ENCODE measurements at regions of chr12 and their contacts with region 1.

Region 1: GRCh38 chr12:12736759-12737676 is 19.9 kb downstream of the CDKN1B start:
- DNase-seq: peak; percentile 61 to 70 (median 64)
- H3K4me3 ChIP-seq: peak overlapping the region in 1 of 2 donors; percentile 46
- H3K4me3 Mint-ChIP-seq: peak overlapping the region; percentile 67 to 88 (median 76)
- H3K27ac ChIP-seq: peak overlapping the region; percentile 76
- H3K27ac Mint-ChIP-seq: peak overlapping the region; percentile 88 to 93 (median 93)
- H3K4me1 ChIP-seq: peaks cover 55% of the 10 kb centered on the region
- H3K4me1 Mint-ChIP-seq: peaks cover 24 to 59% (median 41%) of the 10 kb centered on the region in 4 donors
- H3K27me3 ChIP-seq: no peaks in the 10 kb centered on the region
- H3K27me3 Mint-ChIP-seq: no peaks in the 10 kb centered on the region

Region 2: DNA sequence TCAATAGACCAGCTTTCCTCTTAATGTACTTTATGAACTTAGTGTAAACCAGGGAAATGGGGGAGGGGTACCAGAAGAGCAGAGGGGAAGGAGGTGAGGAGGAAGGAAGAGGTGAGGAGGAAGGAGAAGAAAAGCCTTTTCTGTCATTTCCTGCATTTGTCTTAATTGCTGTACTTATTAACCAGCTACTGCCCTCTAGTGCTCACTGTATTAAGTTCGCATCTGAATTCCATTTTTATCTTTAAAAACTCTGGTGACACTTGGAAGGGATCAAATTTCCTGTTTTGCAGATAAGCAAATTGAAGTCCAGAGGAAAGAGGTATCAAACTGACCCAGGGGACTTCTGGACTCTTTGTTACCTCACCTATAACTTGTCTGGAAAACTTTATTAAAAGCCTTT is 409.2 kb before region 1 on chr12:
- CTCF ChIA-PET with region 1: interaction called, 13 read pairs
- POLR2A ChIA-PET with region 1: interaction called, 3 read pairs
- intact Hi-C with region 1: no loop called
- DNase-seq: peak; percentile 37 to 62 (median 56)
- H3K4me3 ChIP-seq: no peak overlapping the region
- H3K4me3 Mint-ChIP-seq: no peak overlapping the region
- H3K27ac ChIP-seq: no peak overlapping the region
- H3K27ac Mint-ChIP-seq: peak overlapping the region in 4 of 7 donors; percentile 25 to 82 (median 51)
- H3K4me1 ChIP-seq: peaks cover 9% of the 10 kb centered on the region
- H3K4me1 Mint-ChIP-seq: peaks cover 7 to 9% (median 9%) of the 10 kb centered on the region in 4 donors
- H3K27me3 ChIP-seq: no peaks in the 10 kb centered on the region
- H3K27me3 Mint-ChIP-seq: no peaks in the 10 kb centered on the region

Region 3: GRCh38 chr12:12486661-12487240 is 250.3 kb before region 1 on chr12:
- CTCF ChIA-PET with region 1: interaction called, 15 read pairs
- POLR2A ChIA-PET with region 1: interaction called, 13 read pairs
- intact Hi-C with region 1: no loop called
- DNase-seq: no peak
- H3K4me3 ChIP-seq: no peak overlapping the region
- H3K4me3 Mint-ChIP-seq: peak overlapping the region in 6 of 8 donors; percentile 14 to 65 (median 28)
- H3K27ac ChIP-seq: peak overlapping the region; percentile 40
- H3K27ac Mint-ChIP-seq: peak overlapping the region; percentile 84 to 99 (median 92)
- H3K4me1 ChIP-seq: peaks cover 78% of the 10 kb centered on the region
- H3K4me1 Mint-ChIP-seq: peaks cover 36 to 70% (median 56%) of the 10 kb centered on the region in 4 donors
- H3K27me3 ChIP-seq: no peaks in the 10 kb centered on the region
- H3K27me3 Mint-ChIP-seq: no peaks in the 10 kb centered on the region

Region 4: DNA sequence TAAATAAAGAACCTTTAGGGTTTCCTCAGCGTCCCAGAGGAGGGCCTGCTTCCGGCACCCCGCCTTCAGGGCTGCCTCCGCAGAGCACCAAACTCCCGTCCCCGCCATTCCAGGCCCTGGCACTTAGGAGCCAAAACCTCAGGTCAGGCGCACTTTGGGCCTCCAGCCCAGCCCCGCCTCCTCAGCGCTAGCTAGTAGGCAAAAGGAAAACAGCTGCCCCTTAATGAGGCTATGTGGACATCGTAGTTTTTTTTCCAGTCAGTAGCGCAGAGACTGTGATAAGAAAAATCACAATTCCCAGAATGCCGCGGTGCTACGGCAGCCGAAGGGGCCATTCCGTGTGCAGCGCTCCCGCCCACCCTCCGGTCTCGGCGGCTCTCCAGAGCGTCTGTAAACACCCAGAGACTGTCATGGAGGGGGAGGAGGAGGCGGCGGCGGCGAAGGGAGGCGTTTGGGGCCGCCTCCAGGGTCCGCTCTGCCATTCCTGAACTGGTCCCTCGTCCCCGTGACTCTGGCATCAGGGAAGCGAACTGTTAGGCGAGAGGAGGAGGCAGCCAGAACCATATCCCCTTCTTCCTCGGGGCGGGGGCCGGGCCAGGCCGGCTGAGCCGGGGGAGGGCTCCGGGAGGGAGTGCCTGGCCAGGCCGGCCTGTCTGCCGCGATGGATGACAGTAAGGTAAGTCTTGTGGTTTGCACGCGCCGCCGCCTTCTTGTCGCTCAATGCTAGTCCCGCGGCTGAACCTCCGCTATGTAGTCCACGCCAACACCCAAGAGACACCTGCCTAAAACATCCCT is 125.3 kb before region 1 on chr12 and contains the start of gene CREBL2:
- CTCF ChIA-PET with region 1: interaction called, 6 read pairs
- POLR2A ChIA-PET with region 1: interaction called, 21 read pairs
- intact Hi-C with region 1: loop called (anchors 1 kb)
- DNase-seq: peak; percentile 88 to 89 (median 88)
- H3K4me3 ChIP-seq: peak within 1 kb of the TSS; percentile 92 to 97
- H3K4me3 Mint-ChIP-seq: peak within 1 kb of the TSS; percentile 92 to 99 (median 95)
- H3K27ac ChIP-seq: peak within 1 kb of the TSS; percentile 77
- H3K27ac Mint-ChIP-seq: peak within 1 kb of the TSS; percentile 93 to 99 (median 99)
- H3K4me1 ChIP-seq: peaks cover 66% of the 10 kb centered on the region
- H3K4me1 Mint-ChIP-seq: peaks cover 34 to 73% (median 54%) of the 10 kb centered on the region in 4 donors
- H3K27me3 ChIP-seq: no peaks in the 10 kb centered on the region
- H3K27me3 Mint-ChIP-seq: no peaks in the 10 kb centered on the region
- total RNA-seq, gene CREBL2: 51.0 to 52.0 TPM

Region 5: GRCh38 chr12:12661086-12661485 is 75.9 kb before region 1 on chr12:
- CTCF ChIA-PET with region 1: interaction called, 90 read pairs
- POLR2A ChIA-PET with region 1: interaction called, 4 read pairs
- intact Hi-C with region 1: loop called (anchors 1 kb)
- DNase-seq: no peak
- H3K4me3 ChIP-seq: no peak overlapping the region
- H3K4me3 Mint-ChIP-seq: no peak overlapping the region
- H3K27ac ChIP-seq: no peak overlapping the region
- H3K27ac Mint-ChIP-seq: no peak overlapping the region
- H3K4me1 ChIP-seq: peaks cover 2% of the 10 kb centered on the region
- H3K4me1 Mint-ChIP-seq: peaks cover 0 to 1% (median under 1%) of the 10 kb centered on the region in 4 donors
- H3K27me3 ChIP-seq: no peaks in the 10 kb centered on the region
- H3K27me3 Mint-ChIP-seq: no peaks in the 10 kb centered on the region

Region 6: GRCh38 chr12:12716793-12717585 is 20.0 kb before region 1 on chr12 and contains the start of gene CDKN1B:
- CTCF ChIA-PET with region 1: interaction called, 104 read pairs
- POLR2A ChIA-PET with region 1: interaction called, 643 read pairs
- intact Hi-C with region 1: loop called (anchors 1 kb)
- DNase-seq: peak; percentile 87 to 90 (median 89)
- H3K4me3 ChIP-seq: peak within 1 kb of the TSS; percentile 94 to 99
- H3K4me3 Mint-ChIP-seq: peak within 1 kb of the TSS; percentile 96 to 100 (median 98)
- H3K27ac ChIP-seq: peak within 1 kb of the TSS; percentile 95
- H3K27ac Mint-ChIP-seq: peak within 1 kb of the TSS; percentile 96 to 99 (median 98)
- H3K4me1 ChIP-seq: peaks cover 51% of the 10 kb centered on the region
- H3K4me1 Mint-ChIP-seq: peaks cover 38 to 63% (median 47%) of the 10 kb centered on the region in 4 donors
- H3K27me3 ChIP-seq: no peaks in the 10 kb centered on the region
- H3K27me3 Mint-ChIP-seq: no peaks in the 10 kb centered on the region
- total RNA-seq, gene CDKN1B: 232 to 238 TPM

Region 7: GRCh38 chr12:12872139-12872881 is 135.3 kb after region 1 on chr12:
- CTCF ChIA-PET with region 1: no interaction called
- POLR2A ChIA-PET with region 1: no interaction called
- intact Hi-C with region 1: no loop called
- DNase-seq: no peak
- H3K4me3 ChIP-seq: no peak overlapping the region
- H3K4me3 Mint-ChIP-seq: no peak overlapping the region
- H3K27ac ChIP-seq: no peak overlapping the region
- H3K27ac Mint-ChIP-seq: peak overlapping the region in 4 of 7 donors; percentile 23 to 75 (median 40)
- H3K4me1 ChIP-seq: no peaks in the 10 kb centered on the region
- H3K4me1 Mint-ChIP-seq: peaks cover 0 to 2% (median under 1%) of the 10 kb centered on the region in 4 donors
- H3K27me3 ChIP-seq: no peaks in the 10 kb centered on the region
- H3K27me3 Mint-ChIP-seq: no peaks in the 10 kb centered on the region